ENCODE measurements at regions of chr4 and their contacts with region 1.

Region 1: DNA sequence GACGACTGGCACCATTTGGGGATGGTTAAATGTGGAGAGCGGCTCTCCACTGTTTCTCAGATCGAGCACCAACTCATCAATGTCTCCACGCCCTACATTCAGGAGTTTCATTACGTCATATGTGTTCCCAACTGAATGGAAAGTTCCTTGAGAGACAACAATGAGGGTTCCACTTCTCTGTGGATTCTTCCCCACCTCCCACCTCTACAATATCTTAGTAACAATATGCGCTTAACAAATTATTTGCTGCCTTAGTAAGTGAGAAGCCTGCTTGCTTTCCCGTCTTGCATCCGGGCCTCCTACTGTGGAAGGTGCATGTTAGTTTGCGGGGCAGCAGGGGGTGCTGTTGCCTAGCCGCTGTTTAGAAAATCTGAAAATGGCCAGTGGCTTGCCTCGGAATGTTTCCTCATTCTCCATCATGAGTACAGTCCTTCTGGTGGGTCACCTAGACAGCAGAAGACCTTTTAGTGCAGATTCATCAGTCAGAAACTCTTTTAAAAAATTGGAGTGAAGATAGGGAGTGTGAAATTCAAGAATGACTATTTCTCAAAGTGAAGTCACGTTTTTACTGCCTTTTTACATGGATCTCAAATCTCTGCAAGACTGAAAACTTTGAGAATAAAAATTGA is 55.7 kb downstream of the PHOX2B start:
- DNase-seq: peak; percentile 45
- H3K4me3 ChIP-seq: peak overlapping the region in 1 of 2 experiments; percentile 22; a peak in 1 of 4 replicates
- H3K27ac ChIP-seq: peak overlapping the region in 1 of 2 experiments; percentile 83; a peak in 2 of 4 replicates
- H3K4me1 ChIP-seq: peaks cover 0 to 10% of the 10 kb centered on the region in 2 experiments; a peak in 2 of 4 replicates
- H3K27me3 ChIP-seq: 0 out of 2 replicates have a peak, but pooled peaks cover 4% of the 10 kb centered on the region
- CTCF ChIP-seq: peak; percentile 92
- EP300 ChIP-seq: no peak
- RAD21 ChIP-seq: peak; percentile 98

Region 2: GRCh38 chr4:41257257-41257901 is 435.5 kb before region 1 on chr4:
- CTCF ChIA-PET with region 1: interaction called, 11 read pairs
- POLR2A ChIA-PET with region 1: interaction called, 10 read pairs
- DNase-seq: peak; percentile 85
- H3K4me3 ChIP-seq: peak overlapping the region; percentile 77 to 97
- H3K27ac ChIP-seq: peak overlapping the region; percentile 73 to 95; a peak in 3 of 4 replicates
- H3K4me1 ChIP-seq: peaks cover 10 to 16% of the 10 kb centered on the region in 2 experiments; a peak in 3 of 4 replicates
- H3K27me3 ChIP-seq: no peaks in the 10 kb centered on the region
- CTCF ChIP-seq: no peak
- EP300 ChIP-seq: no peak
- RAD21 ChIP-seq: no peak

Region 3: DNA sequence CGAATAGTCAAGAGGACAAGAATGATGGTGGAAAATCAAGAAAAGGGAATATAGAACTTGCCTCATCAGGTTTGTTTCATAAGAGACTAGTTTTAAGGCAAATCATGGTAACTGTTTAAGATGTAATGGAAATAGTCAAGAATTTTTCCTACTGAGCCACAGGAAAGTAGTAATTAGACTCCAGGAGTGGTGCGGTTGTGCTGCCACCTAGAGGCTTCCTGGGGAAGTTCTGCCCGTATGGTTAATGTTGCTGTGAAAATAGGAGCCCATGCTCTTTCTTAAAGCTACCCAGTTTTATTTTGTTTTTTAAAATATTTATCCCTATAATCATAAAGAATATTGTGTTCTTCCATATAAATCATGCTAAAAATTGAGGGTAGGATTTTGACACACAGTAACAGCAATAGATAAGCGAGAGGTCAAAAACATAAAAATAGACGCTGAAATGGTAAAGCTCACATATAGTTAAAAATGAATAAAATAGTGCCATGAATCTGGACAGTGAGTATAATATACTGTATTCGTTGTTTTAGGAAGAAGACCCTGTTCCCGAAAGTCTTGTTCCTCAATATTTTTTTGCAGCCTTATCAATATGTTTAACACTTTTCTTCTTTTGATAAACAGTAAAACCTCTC is 31.3 kb before region 1 on chr4:
- CTCF ChIA-PET with region 1: interaction called, 13 read pairs
- POLR2A ChIA-PET with region 1: no interaction called
- DNase-seq: peak; percentile 56
- H3K4me3 ChIP-seq: no peak overlapping the region; a peak in 1 of 4 replicates
- H3K27ac ChIP-seq: no peak overlapping the region
- H3K4me1 ChIP-seq: peaks cover 0 to 3% of the 10 kb centered on the region in 2 experiments; a peak in 1 of 4 replicates
- H3K27me3 ChIP-seq: no peaks in the 10 kb centered on the region
- CTCF ChIP-seq: peak; percentile 98
- EP300 ChIP-seq: no peak
- RAD21 ChIP-seq: peak; percentile 97

Region 4: GRCh38 chr4:41751449-41752061 is 58.7 kb after region 1 on chr4:
- CTCF ChIA-PET with region 1: interaction called, 14 read pairs
- POLR2A ChIA-PET with region 1: interaction called, 4 read pairs
- DNase-seq: peak; percentile 78
- H3K4me3 ChIP-seq: peak overlapping the region in 1 of 2 experiments; percentile 56; a peak in 1 of 4 replicates
- H3K27ac ChIP-seq: peak overlapping the region in 1 of 2 experiments; percentile 100; a peak in 2 of 4 replicates
- H3K4me1 ChIP-seq: peaks cover 0 to 34% of the 10 kb centered on the region in 2 experiments; a peak in 2 of 4 replicates
- H3K27me3 ChIP-seq: peaks cover 63% of the 10 kb centered on the region
- CTCF ChIP-seq: peak; percentile 36
- EP300 ChIP-seq: no peak
- RAD21 ChIP-seq: peak; percentile 32

Region 5: DNA sequence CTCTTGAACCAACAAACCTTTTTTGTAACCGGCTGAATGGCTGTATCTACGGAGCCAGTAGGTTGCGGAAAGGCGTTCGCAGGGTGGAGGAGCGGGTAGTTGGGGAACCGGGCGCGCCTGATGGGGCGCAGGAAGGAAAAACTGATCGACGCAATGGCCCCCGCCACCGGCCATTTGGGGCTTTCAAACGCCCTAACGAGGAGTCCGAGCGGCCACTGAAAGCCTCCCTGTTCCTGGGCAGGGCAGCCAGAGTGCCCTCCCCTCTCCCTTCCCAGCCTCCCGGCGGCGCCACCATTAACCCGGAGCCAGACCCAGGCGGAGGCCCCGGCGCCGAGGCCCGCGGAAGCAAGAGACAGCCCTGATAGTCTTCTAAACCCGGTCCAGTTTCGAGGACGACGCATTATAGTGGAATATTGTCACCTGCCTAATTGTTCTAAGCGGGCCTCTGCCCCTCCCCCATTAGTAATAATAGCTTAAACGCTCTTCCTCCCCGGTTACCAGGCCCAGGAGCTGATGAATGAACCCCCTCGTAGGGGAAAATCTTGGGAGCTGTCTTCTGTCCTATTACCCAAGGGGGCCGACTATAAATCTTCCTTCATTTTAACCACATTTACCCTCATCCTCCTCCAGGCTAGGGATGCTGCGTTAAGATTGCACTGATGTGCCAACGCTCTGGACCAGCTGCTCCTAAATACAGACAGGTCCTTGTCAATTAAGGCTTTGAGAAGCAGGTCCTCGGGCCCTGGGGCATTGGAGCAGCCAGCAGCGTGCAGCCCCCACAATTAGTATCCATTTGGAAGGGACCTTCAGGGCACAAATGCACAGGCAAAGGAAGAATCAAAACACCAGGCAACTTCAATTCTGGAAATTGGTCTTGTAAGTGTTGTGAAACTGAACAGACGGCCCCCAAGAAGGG is 180.8 kb after region 1 on chr4:
- CTCF ChIA-PET with region 1: interaction called, 188 read pairs
- POLR2A ChIA-PET with region 1: interaction called, 6 read pairs
- DNase-seq: peak; percentile 88
- H3K4me3 ChIP-seq: peak overlapping the region; percentile 3 to 36; a peak in 3 of 4 replicates
- H3K27ac ChIP-seq: peak overlapping the region in 1 of 2 experiments; percentile 99; a peak in 2 of 4 replicates
- H3K4me1 ChIP-seq: peaks cover 0 to 60% of the 10 kb centered on the region in 2 experiments; a peak in 2 of 4 replicates
- H3K27me3 ChIP-seq: peaks cover 29% of the 10 kb centered on the region
- CTCF ChIP-seq: no peak
- EP300 ChIP-seq: peak; percentile 55 to 99; a peak in 3 of 4 replicates
- RAD21 ChIP-seq: 0 out of 2 replicates have a peak, but pooled peaks have one; percentile 7

Region 6: GRCh38 chr4:41887821-41888686 is 195.2 kb after region 1 on chr4:
- CTCF ChIA-PET with region 1: interaction called, 188 read pairs
- POLR2A ChIA-PET with region 1: no interaction called
- DNase-seq: no peak
- H3K4me3 ChIP-seq: no peak overlapping the region; a peak in 1 of 4 replicates
- H3K27ac ChIP-seq: peak overlapping the region in 1 of 2 experiments; percentile 99; a peak in 2 of 4 replicates
- H3K4me1 ChIP-seq: peaks cover 0 to 39% of the 10 kb centered on the region in 2 experiments; a peak in 2 of 4 replicates
- H3K27me3 ChIP-seq: peaks cover 10% of the 10 kb centered on the region; the same call in 1 of the 2 replicates
- CTCF ChIP-seq: peak; percentile 98
- EP300 ChIP-seq: peak in 1 of 2 experiments; percentile 64; a peak in 1 of 4 replicates
- RAD21 ChIP-seq: peak; percentile 82

Region 7: DNA sequence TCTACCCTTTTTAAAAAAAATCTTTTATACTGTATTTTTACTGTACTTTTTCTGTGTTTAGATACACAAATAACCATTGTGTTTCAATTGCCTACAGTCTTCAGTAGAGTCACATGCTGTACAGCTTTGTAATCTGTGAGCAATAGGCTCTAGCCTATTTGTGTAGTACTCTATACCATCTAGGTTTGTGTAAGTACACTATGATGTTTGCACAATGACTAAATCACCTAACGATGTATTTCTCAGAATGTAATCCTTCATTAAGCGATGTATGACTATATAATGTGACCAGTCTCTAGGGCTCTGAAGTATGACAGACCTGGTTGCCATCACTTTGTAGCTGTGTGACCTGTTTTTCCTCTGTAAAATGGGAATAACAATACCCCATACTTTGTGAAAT is 274.6 kb after region 1 on chr4:
- CTCF ChIA-PET with region 1: interaction called, 14 read pairs
- POLR2A ChIA-PET with region 1: interaction called, 3 read pairs
- DNase-seq: no peak
- H3K4me3 ChIP-seq: no peak overlapping the region
- H3K27ac ChIP-seq: no peak overlapping the region
- H3K4me1 ChIP-seq: no peaks in the 10 kb centered on the region
- H3K27me3 ChIP-seq: no peaks in the 10 kb centered on the region
- CTCF ChIP-seq: no peak
- EP300 ChIP-seq: no peak
- RAD21 ChIP-seq: no peak

Measured in SK-N-SH (cell line).